PC-3 (cell line): ENCODE measurements at regions of chr17 and their contacts with region 1.

Region 1: GRCh38 chr17:62703775-62704378 is 76.4 kb downstream of the MRC2 start:
- DNase-seq: peak; percentile 90
- ATAC-seq: peak; percentile 78
- H3K4me3 ChIP-seq: peak overlapping the region; percentile 73
- H3K27ac ChIP-seq: peak overlapping the region; percentile 84
- H3K4me1 ChIP-seq: peaks cover 29% of the 10 kb centered on the region
- H3K27me3 ChIP-seq: no peaks in the 10 kb centered on the region
- CTCF ChIP-seq: peak; percentile 82

Region 2: DNA sequence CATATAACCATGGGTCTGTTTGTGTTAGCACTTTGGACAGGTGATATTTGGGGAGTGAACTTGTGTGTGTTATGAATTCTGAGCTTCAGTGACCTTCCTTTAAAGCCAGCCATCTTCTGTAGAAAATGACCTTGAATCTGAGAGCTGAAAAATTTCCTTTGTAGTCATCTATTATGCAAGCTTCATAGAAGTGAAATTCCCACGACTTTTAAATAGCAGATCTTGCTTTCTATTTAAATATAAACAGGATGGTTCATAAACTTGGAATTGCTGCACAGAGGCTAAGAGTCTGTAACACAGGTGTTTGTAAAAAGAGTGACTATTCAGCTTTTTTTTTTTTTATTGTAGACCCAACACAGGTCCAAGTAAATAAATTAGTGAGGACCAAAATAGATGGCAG is 18.7 kb after region 1 on chr17:
- CTCF ChIA-PET with region 1: interaction called, 19 read pairs
- POLR2A ChIA-PET with region 1: no interaction called
- intact Hi-C with region 1: no loop called
- DNase-seq: no peak
- ATAC-seq: no peak
- H3K4me3 ChIP-seq: no peak overlapping the region
- H3K27ac ChIP-seq: no peak overlapping the region
- H3K4me1 ChIP-seq: peaks cover 22% of the 10 kb centered on the region
- H3K27me3 ChIP-seq: no peaks in the 10 kb centered on the region
- CTCF ChIP-seq: no peak

Region 3: DNA sequence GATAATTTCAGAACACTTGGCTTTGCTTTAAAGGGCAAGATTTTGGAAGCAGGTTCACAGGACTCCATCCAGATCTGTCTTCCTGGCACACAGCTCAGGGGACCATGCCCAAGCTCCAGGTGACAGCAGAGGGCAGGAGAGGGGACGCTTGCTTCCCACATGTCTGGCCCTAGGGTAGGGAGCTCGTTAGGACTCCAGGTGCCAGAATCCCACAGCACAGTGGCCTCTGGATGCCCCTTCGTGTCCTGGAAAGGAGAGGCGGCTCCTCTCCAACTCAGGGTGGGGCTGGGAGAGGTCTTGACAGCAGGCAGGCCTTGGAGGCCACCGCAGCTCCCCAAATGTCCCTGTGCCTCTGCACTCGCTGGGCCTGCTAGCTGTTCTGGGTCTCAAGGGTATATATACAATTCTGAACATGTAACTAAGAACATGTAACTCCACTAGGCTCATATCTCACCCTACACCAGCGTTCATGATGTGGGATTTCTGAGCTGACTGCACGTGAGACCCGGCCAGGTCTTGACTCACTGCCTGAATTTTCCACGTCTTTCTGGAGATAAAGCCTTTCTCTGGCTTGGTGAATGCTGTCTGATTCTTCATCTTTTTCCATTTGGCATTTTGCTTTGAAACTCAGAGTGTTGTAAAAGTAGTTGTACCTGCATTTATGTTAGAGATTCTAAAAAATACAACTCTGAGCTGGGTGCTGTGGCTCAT is 51.4 kb after region 1 on chr17:
- CTCF ChIA-PET with region 1: no interaction called
- POLR2A ChIA-PET with region 1: no interaction called
- intact Hi-C with region 1: no loop called
- DNase-seq: no peak
- ATAC-seq: no peak
- H3K4me3 ChIP-seq: no peak overlapping the region
- H3K27ac ChIP-seq: no peak overlapping the region
- H3K4me1 ChIP-seq: peaks cover 13% of the 10 kb centered on the region
- H3K27me3 ChIP-seq: no peaks in the 10 kb centered on the region
- CTCF ChIP-seq: 0 out of 2 replicates have a peak, but pooled peaks have one; percentile 8

Region 4: GRCh38 chr17:62791751-62792445 is 88.0 kb after region 1 on chr17:
- CTCF ChIA-PET with region 1: no interaction called
- POLR2A ChIA-PET with region 1: no interaction called
- intact Hi-C with region 1: loop called (anchors 2 kb)
- DNase-seq: peak; percentile 98
- ATAC-seq: peak; percentile 61
- H3K4me3 ChIP-seq: peak overlapping the region; percentile 27
- H3K27ac ChIP-seq: peak overlapping the region; percentile 89
- H3K4me1 ChIP-seq: peaks cover 53% of the 10 kb centered on the region
- H3K27me3 ChIP-seq: no peaks in the 10 kb centered on the region
- CTCF ChIP-seq: no peak

Region 5: DNA sequence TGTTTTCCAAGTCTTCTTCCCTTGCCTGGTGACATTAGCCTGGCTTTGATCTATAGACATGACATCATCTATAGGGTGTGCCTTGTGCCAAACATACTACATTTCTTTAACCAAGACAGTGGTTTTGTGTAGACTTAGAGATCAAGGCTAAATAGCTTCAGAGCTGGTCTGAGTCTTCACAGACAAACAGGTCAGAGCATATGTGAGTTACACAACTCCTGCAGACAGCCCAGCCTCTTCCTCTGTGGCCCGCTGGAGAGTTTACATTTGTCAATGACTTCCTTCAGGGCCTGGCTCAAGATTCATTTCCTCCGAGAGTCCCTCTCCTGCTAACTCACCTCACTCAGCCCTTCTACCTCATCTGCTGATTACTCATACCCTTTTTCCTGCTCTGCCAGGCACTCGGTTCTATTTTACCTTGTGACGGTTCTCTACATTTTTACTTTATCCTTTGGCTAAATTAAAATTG is 189.0 kb after region 1 on chr17:
- CTCF ChIA-PET with region 1: no interaction called
- POLR2A ChIA-PET with region 1: no interaction called
- intact Hi-C with region 1: loop called (anchors 2 kb)
- DNase-seq: peak; percentile 99
- ATAC-seq: peak; percentile 94
- H3K4me3 ChIP-seq: no peak overlapping the region; the same call in 1 of the 2 replicates
- H3K27ac ChIP-seq: peak overlapping the region; percentile 79
- H3K4me1 ChIP-seq: peaks cover 43% of the 10 kb centered on the region
- H3K27me3 ChIP-seq: no peaks in the 10 kb centered on the region
- CTCF ChIP-seq: no peak

Region 6: DNA sequence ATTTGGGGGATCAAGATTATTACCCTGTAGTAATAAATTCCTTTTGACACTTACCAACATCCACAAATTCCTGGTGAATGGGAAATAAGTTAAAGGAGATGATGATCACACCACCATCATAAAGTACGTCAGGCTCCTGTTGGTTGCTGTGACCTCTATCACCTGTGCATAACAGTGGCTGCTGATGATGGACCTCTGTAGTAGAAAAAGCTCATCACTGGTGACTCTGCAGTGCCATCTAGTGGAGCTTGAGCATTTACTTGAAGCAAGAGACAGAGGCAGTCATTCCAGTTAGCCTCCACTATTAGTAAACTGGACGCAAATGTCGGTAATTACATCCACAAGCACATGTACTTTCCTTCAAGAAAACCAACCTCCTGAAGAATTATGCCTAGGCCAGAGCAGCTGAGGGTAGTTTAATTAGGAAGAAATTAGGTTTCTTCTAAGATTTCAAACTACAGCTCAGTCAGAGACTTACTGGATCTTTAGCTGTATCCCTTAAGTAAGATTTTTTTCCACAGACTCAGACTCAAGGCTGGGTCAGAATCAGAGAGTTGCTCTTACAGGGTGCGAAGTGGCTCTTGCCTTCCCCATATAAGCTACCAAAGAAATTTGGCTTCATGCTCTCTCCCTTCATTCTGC is 702.9 kb after region 1 on chr17:
- CTCF ChIA-PET with region 1: interaction called, 3 read pairs
- POLR2A ChIA-PET with region 1: no interaction called
- intact Hi-C with region 1: loop called (anchors 1 kb)
- DNase-seq: peak; percentile 97
- ATAC-seq: peak; percentile 92
- H3K4me3 ChIP-seq: no peak overlapping the region
- H3K27ac ChIP-seq: no peak overlapping the region
- H3K4me1 ChIP-seq: peaks cover 11% of the 10 kb centered on the region
- H3K27me3 ChIP-seq: no peaks in the 10 kb centered on the region
- CTCF ChIP-seq: peak; percentile 98